ENCODE measurements at regions of chr16 and their contacts with region 1.

Region 1: DNA sequence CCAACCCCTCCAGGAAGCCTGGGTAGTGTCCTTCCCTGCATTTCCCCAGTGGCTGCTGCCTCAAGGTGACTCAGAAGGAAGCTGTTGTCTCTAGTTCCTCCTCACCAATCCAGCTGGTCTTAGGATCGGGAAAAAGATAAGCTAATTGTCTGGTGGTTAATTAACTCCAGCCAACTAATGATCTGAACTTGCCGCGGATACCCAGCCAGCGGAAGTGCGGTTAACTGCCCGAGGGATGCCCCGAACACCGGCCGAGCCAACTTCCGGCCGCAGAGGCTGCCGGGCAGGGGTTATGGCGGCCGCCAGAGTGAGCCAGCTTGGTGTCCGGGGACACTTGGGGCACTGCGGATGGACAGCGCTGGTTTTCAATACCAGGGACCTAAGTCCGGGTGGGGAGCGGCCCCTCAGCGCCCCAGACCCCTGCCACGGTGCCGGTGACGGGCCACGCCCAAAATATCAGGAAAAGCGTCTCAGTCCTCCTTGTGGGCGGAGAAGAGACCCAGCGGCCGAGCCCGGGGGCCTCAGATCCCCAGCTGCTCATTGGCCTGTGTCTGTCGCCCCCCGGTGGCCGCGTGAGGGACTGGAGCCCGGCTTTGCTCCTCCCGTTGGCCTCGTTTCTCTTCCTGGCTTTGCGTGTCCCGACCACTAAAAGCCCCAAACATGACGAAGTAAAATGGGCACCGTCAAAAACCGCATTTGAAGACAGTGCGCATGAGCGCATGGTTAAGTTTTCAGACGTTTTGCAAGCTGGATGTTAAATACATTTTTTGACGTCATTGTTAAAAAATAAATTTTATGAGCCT is 10.2 kb upstream of the PRSS22 start:
- DNase-seq: peak; percentile 96 to 98
- ATAC-seq: peak; percentile 98 to 99
- H3K4me3 ChIP-seq: peak overlapping the region; percentile 59
- H3K27ac ChIP-seq: peak overlapping the region; percentile 90 to 95
- H3K4me1 ChIP-seq: 0 out of 3 replicates have a peak, but pooled peaks cover 3% of the 10 kb centered on the region
- CTCF ChIP-seq: peak; percentile 95
- EP300 ChIP-seq: no peak
- POLR2A ChIP-seq: peak; percentile 71
- RAD21 ChIP-seq: peak; percentile 92 to 99

Region 2: DNA sequence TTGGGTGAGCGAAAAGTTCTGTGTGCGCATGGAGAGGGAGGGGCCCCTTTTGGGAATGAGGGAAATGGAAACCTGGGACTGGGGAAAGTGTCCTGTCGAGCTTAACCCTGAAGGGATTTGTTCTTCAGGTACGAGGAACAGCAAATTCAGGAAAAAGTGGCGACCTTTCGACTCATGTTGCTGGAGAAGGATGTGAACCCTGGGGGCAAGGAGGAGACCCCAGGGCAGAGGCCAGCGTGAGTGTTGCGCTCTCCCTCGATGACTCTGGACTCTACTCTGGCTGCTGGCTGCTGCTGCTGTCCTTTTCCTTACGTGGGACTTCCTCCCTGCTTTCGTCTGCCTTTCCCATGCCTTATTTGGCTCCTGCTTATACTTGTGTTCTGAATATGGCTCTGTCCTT is 110.8 kb before region 1 on chr16:
- CTCF ChIA-PET with region 1: interaction called, 10 read pairs
- POLR2A ChIA-PET with region 1: interaction called, 13 read pairs
- DNase-seq: no peak
- ATAC-seq: no peak
- H3K4me3 ChIP-seq: no peak overlapping the region
- H3K27ac ChIP-seq: no peak overlapping the region
- H3K4me1 ChIP-seq: peaks cover 23% of the 10 kb centered on the region
- CTCF ChIP-seq: no peak
- EP300 ChIP-seq: no peak
- POLR2A ChIP-seq: no peak
- RAD21 ChIP-seq: no peak

Region 3: DNA sequence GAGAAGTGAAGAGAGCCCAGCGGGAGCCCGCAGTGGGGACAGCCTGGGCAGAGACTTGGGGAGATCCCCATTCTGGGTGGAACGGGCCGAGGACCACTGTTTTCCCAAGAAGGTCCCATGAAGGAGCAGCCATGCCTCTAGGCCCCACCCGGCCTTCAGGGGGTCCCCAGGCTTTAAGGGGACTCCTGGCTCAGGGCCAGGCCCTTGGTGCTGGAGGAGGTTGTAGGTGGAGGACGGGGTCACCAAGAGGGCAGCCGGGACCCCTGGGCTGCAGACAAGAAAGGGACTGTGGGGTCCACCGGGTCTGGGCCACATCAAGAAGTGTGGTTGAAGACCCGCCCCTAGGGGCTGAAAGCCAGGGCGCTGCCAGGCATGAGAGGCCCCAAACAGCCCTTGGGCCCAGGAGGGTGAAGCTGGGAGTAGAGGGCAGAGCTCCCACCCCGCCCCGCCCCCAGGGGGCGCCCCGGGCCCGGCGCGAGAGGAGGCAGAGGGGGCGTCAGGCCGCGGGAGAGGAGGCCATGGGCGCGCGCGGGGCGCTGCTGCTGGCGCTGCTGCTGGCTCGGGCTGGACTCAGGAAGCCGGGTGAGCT is 51.3 kb before region 1 on chr16 and contains the start of gene PRSS21:
- CTCF ChIA-PET with region 1: interaction called, 11 read pairs
- POLR2A ChIA-PET with region 1: interaction called, 3 read pairs
- DNase-seq: no peak
- ATAC-seq: peak in 1 of 2 experiments; percentile 52; a peak in 3 of 6 replicates
- H3K4me3 ChIP-seq: no peak within 1 kb of the TSS
- H3K27ac ChIP-seq: no peak within 1 kb of the TSS
- H3K4me1 ChIP-seq: no peaks in the 10 kb centered on the region
- CTCF ChIP-seq: no peak
- EP300 ChIP-seq: no peak
- POLR2A ChIP-seq: no peak
- RAD21 ChIP-seq: no peak
- polyA plus RNA-seq, gene PRSS21: 0.16 and 0.23 TPM in 2 replicates

Region 4: GRCh38 chr16:2854700-2855309 is 13.4 kb before region 1 on chr16:
- CTCF ChIA-PET with region 1: interaction called, 15 read pairs
- POLR2A ChIA-PET with region 1: interaction called, 6 read pairs
- DNase-seq: no peak
- ATAC-seq: no peak
- H3K4me3 ChIP-seq: no peak overlapping the region
- H3K27ac ChIP-seq: no peak overlapping the region
- H3K4me1 ChIP-seq: peaks cover 13% of the 10 kb centered on the region
- CTCF ChIP-seq: peak; percentile 42
- EP300 ChIP-seq: no peak
- POLR2A ChIP-seq: no peak
- RAD21 ChIP-seq: peak; percentile 20 to 33; a peak in 2 of 5 replicates

Region 5: DNA sequence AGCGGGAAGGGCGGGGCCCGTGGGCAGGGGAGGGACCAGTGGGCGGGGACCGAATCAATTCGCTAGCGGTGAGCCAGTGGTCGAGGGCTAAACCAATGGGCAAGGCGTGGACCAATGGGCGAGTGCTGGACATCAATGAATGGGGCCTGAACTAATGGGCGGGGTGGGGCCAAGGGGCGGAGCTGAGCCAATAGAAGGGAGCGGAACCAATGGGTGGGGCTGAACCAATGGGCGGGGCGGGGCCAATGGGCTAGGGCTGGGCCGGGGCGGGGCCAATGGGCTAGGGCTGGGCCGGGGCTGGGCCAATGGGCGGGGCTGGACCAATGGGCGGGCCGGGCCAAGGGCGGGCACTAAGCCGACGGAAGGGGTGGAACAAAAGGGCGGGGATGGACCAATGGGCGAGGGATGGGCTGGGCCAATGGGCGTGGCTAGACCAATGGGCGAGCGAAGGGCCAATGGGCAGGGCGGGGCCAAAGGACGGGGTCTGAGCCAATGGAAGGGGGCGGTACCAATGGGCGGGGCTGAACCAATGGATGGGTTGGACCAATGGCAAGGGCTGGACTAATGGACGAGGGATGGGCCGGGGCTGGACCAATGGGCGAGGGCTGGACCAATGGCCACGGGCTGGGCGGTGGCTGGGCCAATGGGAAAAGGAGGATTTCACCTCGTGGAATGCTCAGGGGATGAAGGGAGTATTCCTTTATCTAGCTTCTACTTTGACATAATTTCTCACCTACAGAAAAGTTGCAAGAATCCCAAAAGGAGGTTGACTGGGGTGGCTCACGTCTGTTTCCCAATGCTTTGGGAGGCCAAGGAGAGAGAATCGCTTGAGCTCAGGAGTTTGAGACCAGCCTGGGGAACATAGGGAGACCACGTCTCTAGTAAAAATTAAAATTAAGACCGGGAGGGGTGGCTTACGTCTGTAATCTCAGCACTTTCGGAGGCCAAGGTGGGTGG is 37.5 kb after region 1 on chr16:
- CTCF ChIA-PET with region 1: interaction called, 14 read pairs
- POLR2A ChIA-PET with region 1: interaction called, 11 read pairs
- DNase-seq: peak; percentile 98 to 100
- ATAC-seq: peak; percentile 80 to 88
- H3K4me3 ChIP-seq: peak overlapping the region; percentile 80; the same call in 2 of the 3 replicates
- H3K27ac ChIP-seq: peak overlapping the region in 1 of 2 experiments; percentile 98; a peak in 2 of 6 replicates
- H3K4me1 ChIP-seq: peaks cover 19% of the 10 kb centered on the region
- CTCF ChIP-seq: no peak
- EP300 ChIP-seq: no peak
- POLR2A ChIP-seq: no peak
- RAD21 ChIP-seq: no peak

Region 6: DNA sequence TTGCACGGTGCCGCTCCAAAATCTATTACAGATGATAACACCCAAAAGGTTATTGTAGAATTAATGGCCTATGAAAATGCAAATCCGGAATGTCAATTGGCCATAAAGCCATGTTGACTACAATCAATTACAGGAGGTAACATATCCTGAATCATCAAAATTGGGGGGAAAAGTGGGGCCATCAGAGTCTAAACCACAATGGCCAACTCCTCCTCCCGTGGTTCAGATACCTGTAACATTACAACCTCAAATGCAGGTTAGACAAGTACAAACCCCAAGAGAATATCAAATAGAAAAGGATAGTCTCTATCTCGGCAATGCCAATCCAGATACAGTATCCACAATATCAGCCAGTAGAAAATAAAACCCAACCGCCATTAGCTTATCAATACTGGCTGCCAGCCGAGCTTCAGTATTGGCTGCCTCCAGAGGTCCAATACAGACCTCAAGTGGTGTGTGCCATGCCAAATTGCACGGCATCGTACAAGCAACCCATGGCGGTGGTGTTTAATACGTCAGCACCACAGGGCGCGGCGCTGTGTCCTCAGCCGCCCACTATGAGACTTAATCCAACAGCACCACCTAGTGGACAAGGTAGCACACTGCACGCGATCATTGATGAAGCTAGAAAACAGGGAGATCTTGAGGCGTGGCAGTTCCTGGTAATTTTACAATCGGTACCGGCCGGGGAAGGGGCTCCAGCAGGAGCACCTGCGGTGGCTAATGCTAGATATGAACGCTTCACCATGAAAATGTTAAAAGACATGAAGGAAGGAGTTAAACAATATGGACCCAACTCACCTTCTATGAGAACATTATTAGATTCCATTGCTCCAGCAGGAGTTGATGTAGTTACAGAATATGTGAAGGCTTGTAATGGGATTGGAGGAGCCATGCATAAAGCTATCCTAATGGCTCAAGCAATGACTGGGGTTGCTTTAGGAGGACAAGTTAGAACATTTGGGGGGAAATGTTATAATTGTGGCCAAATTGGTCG is 58.8 kb after region 1 on chr16:
- CTCF ChIA-PET with region 1: interaction called, 56 read pairs
- POLR2A ChIA-PET with region 1: interaction called, 3 read pairs
- DNase-seq: peak; percentile 55 to 89
- ATAC-seq: peak; percentile 89 to 93
- H3K4me3 ChIP-seq: no peak overlapping the region
- H3K27ac ChIP-seq: 0 out of 6 replicates have a peak overlapping the region, but pooled peaks of 1 of the 2 experiments have one; percentile 2
- H3K4me1 ChIP-seq: peaks cover 3% of the 10 kb centered on the region; the same call in 1 of the 3 replicates
- CTCF ChIP-seq: peak; percentile 91
- EP300 ChIP-seq: no peak
- POLR2A ChIP-seq: no peak
- RAD21 ChIP-seq: peak; percentile 73 to 79

Region 7: GRCh38 chr16:4544473-4544872 is 1676.3 kb after region 1 on chr16:
- CTCF ChIA-PET with region 1: no interaction called
- POLR2A ChIA-PET with region 1: no interaction called
- DNase-seq: no peak
- ATAC-seq: no peak
- H3K4me3 ChIP-seq: no peak overlapping the region
- H3K27ac ChIP-seq: no peak overlapping the region
- H3K4me1 ChIP-seq: no peaks in the 10 kb centered on the region
- CTCF ChIP-seq: no peak
- EP300 ChIP-seq: no peak
- POLR2A ChIP-seq: no peak
- RAD21 ChIP-seq: no peak

Measured in A549 (cell line).